ENCODE measurements at regions of chr3 and their contacts with region 1.

Region 1: GRCh38 chr3:40524568-40525285 is at the start of gene ZNF621:
- DNase-seq: peak; percentile 97
- ATAC-seq: peak; percentile 100
- total RNA-seq, gene ZNF621: 10.5 TPM

Region 2: GRCh38 chr3:40309418-40309924 is 215.3 kb before region 1 on chr3 and contains the start of gene EIF1B:
- intact Hi-C with region 1: no loop called
- DNase-seq: peak; percentile 99
- ATAC-seq: peak; percentile 96
- total RNA-seq, gene EIF1B: 327 TPM

Region 3: GRCh38 chr3:40366203-40367162 is 158.2 kb before region 1 on chr3:
- intact Hi-C with region 1: no loop called
- DNase-seq: no peak
- ATAC-seq: no peak

Region 4: DNA sequence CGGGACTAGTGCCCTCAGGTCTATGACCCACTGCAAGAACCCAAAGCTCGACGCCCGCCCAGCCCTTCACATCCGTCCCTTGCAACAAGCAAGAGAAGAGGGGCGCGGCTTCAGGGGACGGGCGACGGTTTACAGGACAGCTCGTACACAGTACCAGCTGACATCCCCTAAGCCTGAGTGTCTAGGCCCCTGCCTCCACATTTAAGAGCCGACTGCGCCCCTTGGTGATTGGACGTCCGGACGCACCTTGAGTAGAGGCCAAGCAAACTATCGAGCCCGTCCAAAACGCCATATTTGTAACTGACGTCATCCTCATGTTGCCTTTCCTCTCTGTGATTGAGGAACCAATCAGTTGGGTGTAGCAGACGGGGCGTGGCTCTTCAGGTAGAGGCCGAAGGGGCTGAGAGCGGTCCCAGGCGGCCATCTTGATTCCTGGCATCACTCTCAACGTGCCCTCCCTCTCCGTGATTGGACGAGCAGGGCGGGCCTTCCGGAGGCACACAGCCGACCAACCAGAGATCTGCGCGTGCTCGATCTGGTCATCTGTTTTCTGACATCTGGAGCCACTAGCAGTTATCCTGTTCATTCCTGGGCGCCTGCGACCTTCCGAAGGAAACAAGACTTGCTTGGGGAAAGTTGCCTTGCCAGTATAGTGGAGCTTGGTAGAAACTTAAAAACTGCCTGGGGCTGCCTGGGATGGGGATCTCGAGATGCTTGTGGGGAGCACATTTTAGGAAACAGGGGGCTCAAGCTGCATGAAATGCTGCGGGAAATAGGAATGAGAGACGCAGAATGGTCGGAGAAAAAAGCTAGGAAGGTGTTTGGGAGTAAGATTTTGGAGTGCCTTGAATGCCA is 71.6 kb before region 1 on chr3:
- intact Hi-C with region 1: loop called (anchors 1 kb)
- DNase-seq: peak; percentile 99
- ATAC-seq: peak; percentile 97

Region 5: GRCh38 chr3:40476478-40477470 is 48.0 kb before region 1 on chr3 and contains the start of gene ZNF619:
- intact Hi-C with region 1: loop called (anchors 2 kb)
- DNase-seq: peak; percentile 90
- ATAC-seq: peak; percentile 91
- total RNA-seq, gene ZNF619: 3.9 TPM

Region 6: GRCh38 chr3:40505599-40506462 is 18.9 kb before region 1 on chr3 and contains the start of gene ZNF620:
- intact Hi-C with region 1: loop called (anchors 2 kb)
- DNase-seq: peak; percentile 77
- ATAC-seq: peak; percentile 91
- total RNA-seq, gene ZNF620: 1.6 TPM

Region 7: DNA sequence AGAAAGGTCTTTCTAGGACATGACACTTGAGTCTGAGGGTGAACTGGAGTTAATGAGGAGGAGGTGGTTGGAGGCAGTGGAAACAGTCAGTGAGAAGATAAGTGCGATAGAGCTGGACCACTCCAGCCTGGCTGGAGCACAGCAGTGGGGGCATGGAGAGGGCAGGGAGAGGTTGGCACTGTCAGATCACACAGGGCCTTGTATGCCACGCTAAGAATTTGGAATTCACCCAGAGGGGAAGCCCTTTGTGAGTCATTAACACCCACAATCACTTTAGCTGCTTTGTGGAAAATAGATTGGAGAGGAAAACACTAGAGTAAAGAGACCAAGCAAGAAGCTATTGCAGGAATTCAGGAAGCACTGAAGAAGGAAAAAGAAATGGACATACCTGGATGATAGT is 83.4 kb after region 1 on chr3:
- intact Hi-C with region 1: no loop called
- DNase-seq: no peak
- ATAC-seq: peak; percentile 44

Region 8: DNA sequence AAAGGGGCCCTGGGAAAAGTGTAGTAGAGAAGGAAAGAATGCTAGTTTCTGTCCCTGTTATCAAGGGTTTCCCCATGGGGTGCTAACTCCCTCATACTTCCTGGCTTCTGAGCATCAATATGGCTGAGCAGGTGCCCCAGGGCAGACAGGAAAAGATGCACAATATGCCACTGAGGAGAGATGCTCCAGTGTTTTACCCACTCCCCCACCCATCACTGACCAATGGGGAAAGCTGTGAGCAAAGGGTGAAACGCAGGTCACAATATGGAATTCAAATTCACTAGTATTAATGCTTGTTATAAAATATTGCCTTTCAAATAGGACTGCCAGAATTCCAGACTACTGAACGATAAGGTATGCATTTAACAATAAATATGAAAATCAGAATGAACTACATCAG is 487.1 kb after region 1 on chr3:
- intact Hi-C with region 1: no loop called
- DNase-seq: no peak
- ATAC-seq: no peak